ENCODE measurements at regions of chr19 and their contacts with region 1.

Region 1: DNA sequence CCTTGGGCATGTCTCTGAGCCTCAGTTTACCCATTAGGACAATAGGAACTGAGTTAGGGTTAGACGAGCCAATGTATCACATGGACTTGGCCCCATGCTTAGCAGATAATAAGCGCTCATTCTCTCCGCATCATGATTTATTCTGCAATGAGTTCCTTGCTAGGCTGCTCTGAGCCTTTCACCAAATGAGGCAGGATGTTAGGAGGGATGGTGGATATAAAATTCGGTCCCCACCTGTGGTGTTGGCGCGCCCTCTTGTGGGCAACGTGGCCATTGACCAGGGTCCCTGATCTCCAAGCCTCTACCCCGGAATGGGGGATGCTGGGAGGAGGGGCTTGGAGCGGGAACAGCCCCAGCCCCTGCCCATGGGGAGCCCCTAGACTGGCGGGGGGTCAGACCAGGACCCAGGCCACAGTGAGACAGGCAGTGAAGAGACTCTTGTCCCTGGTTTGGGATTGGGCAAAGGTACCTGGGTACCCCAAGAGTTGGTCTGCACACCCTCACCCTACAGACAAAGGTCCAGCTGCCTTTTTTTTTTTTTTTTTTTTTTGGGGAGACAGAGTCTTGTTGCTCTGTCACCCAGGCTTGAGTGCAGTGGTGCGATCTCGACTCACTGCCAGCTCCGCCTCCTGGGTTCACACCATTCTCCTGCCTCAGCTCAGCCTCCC is 43.9 kb downstream of the CERS4 start:
- DNase-seq: peak; percentile 94

Region 2: GRCh38 chr19:7925171-7925851 is 327.7 kb before region 1 on chr19:
- intact Hi-C with region 1: loop called in 1 of 2 experiments (anchors 5 kb)
- DNase-seq: peak; percentile 92

Region 3: GRCh38 chr19:7947939-7948338 is 305.1 kb before region 1 on chr19:
- intact Hi-C with region 1: loop called in 1 of 2 experiments (anchors 5 kb)
- DNase-seq: no peak

Region 4: GRCh38 chr19:8158411-8159074 is 94.5 kb before region 1 on chr19:
- intact Hi-C with region 1: loop called (anchors 5 kb)
- DNase-seq: no peak